ENCODE measurements at regions of chr2 and their contacts with region 1.

Region 1: DNA sequence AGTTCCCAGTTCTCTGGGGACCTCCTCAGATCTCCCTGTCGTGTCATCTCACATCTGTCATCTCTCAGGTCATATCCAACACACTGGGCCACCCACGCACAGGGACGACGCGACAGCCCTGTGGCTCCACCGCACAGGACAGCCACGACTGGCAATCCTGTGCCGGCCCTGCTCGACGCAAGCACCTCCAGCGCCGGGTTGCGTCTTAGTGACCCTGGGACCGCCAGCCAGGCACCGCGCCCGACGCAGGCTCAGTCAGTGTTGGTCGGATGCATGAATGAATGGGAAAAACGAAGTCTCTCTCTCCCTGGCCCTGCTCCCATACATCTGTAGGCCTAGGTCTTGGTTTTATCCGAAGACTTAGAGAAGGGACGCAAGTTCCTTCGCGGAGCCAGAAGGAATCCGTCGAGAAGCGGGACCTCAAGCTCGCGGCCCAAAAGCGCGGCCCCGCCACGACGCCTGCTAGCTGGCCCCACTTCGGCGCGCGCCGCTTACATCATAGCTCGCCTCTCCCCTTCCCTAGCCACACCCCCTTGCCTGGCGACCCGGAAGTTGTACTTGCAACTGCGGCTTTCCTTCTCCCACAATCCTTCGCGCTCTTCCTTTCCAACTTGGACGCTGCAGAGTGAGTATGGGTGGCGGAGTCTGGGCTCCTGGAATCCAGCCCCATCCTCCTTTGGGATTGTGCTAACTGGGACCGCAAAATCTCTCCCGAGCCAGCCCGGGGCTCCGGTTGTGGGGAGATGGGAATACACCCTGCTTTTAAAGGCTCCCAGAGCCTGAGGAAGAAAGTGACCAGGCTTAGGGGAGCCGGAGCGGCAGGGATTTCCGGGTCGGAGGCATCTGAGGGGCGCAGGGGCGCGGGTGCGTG is at the start of gene RPL31:
- DNase-seq: peak; percentile 92 to 98
- ATAC-seq: peak; percentile 96 to 98 (median 97)
- H3K4me3 ChIP-seq: peak within 1 kb of the TSS; percentile 92
- H3K4me3 Mint-ChIP-seq: peak within 1 kb of the TSS; percentile 90
- H3K27ac ChIP-seq: peak within 1 kb of the TSS; percentile 81
- H3K27ac Mint-ChIP-seq: peak within 1 kb of the TSS; percentile 91 to 93
- H3K4me1 ChIP-seq: peaks cover 25% of the 10 kb centered on the region
- H3K4me1 Mint-ChIP-seq: peaks cover 34 to 42% of the 10 kb centered on the region in 2 donors
- H3K27me3 ChIP-seq: no peaks in the 10 kb centered on the region
- H3K27me3 Mint-ChIP-seq: peaks cover 3 to 9% of the 10 kb centered on the region in 2 donors
- CTCF ChIP-seq: no peak
- total RNA-seq, gene RPL31: 797 to 996 (median 940) TPM

Region 2: GRCh38 chr2:100416935-100417710 is 584.8 kb before region 1 on chr2 and contains the start of gene CHST10:
- intact Hi-C with region 1: loop called (anchors 5 kb)
- DNase-seq: peak; percentile 39 to 60
- ATAC-seq: peak; percentile 86 to 93 (median 92)
- H3K4me3 ChIP-seq: peak within 1 kb of the TSS; percentile 56
- H3K4me3 Mint-ChIP-seq: peak within 1 kb of the TSS; percentile 91
- H3K27ac ChIP-seq: no peak within 1 kb of the TSS
- H3K27ac Mint-ChIP-seq: peak within 1 kb of the TSS; percentile 22 to 77
- H3K4me1 ChIP-seq: peaks cover 8% of the 10 kb centered on the region
- H3K4me1 Mint-ChIP-seq: peaks cover 18 to 21% of the 10 kb centered on the region in 2 donors
- H3K27me3 ChIP-seq: no peaks in the 10 kb centered on the region
- H3K27me3 Mint-ChIP-seq: no peaks in the 10 kb centered on the region
- CTCF ChIP-seq: no peak
- total RNA-seq, gene CHST10: 11.1 to 15.3 (median 13.4) TPM

Region 3: GRCh38 chr2:100580367-100581276 is 421.3 kb before region 1 on chr2:
- intact Hi-C with region 1: loop called (anchors 5 kb)
- DNase-seq: peak; percentile 63 to 86
- ATAC-seq: peak; percentile 72 to 93 (median 86)
- H3K4me3 ChIP-seq: peak overlapping the region; percentile 27
- H3K4me3 Mint-ChIP-seq: peak overlapping the region; percentile 92
- H3K27ac ChIP-seq: peak overlapping the region; percentile 93
- H3K27ac Mint-ChIP-seq: peak overlapping the region; percentile 99 to 100
- H3K4me1 ChIP-seq: peaks cover 29% of the 10 kb centered on the region
- H3K4me1 Mint-ChIP-seq: peaks cover 36 to 40% of the 10 kb centered on the region in 2 donors
- H3K27me3 ChIP-seq: no peaks in the 10 kb centered on the region
- H3K27me3 Mint-ChIP-seq: no peaks in the 10 kb centered on the region
- CTCF ChIP-seq: no peak

Region 4: GRCh38 chr2:101252408-101253012 is 250.6 kb after region 1 on chr2 and contains the start of gene CNOT11:
- intact Hi-C with region 1: loop called (anchors 2 kb)
- DNase-seq: peak; percentile 96 to 100
- ATAC-seq: peak; percentile 79 to 93 (median 85)
- H3K4me3 ChIP-seq: peak within 1 kb of the TSS; percentile 84
- H3K4me3 Mint-ChIP-seq: peak within 1 kb of the TSS; percentile 98
- H3K27ac ChIP-seq: peak within 1 kb of the TSS; percentile 96
- H3K27ac Mint-ChIP-seq: peak within 1 kb of the TSS; percentile 93 to 94
- H3K4me1 ChIP-seq: peaks cover 35% of the 10 kb centered on the region
- H3K4me1 Mint-ChIP-seq: peaks cover 41 to 44% of the 10 kb centered on the region in 2 donors
- H3K27me3 ChIP-seq: no peaks in the 10 kb centered on the region
- H3K27me3 Mint-ChIP-seq: no peaks in the 10 kb centered on the region
- CTCF ChIP-seq: no peak
- total RNA-seq, gene CNOT11: 41.7 to 49.8 (median 46.0) TPM

Region 5: DNA sequence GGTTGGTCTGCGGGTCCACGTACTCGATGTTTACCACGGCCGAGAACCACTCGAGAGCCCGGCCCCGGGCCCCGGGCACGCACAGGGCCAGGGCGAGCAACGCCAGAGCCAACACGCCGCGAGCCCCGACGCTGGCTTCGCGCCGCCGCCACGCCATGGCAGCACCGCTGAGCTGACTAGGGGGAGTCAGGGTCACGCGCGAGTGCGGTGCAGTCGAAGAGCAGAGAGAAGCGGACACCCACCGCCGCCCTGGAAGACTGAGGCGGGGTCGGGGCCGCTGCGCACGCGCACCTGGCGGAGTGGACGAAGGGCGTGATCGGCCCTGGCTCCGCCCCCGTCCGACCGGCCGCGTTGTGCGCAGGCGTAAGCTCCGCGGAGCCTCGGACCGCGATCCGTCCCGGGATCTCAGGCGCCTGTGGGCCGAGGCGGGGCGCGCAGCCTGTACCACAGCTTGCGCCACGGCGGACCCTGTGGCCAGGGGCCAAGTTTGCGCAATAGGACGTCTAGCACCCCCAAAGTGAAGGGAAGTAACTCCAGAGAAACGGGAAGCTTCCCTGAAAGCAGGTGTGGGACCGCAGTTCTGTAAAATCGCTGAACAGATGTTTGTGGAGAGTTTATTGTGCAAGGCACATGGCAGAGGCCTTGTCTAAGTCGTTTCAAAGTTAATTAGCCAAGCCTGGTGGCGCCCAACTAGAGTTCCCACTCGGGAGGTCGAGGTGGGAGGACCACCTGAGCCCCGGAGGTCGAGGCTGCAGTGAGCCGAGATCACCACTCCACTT is 306.7 kb after region 1 on chr2 and contains the start of gene RNF149:
- intact Hi-C with region 1: loop called (anchors 1 kb)
- DNase-seq: peak; percentile 94 to 95
- ATAC-seq: peak; percentile 72 to 88 (median 83)
- H3K4me3 ChIP-seq: peak within 1 kb of the TSS; percentile 73
- H3K4me3 Mint-ChIP-seq: peak within 1 kb of the TSS; percentile 99
- H3K27ac ChIP-seq: peak within 1 kb of the TSS; percentile 87
- H3K27ac Mint-ChIP-seq: peak within 1 kb of the TSS; percentile 96 to 98
- H3K4me1 ChIP-seq: peaks cover 56% of the 10 kb centered on the region
- H3K4me1 Mint-ChIP-seq: peaks cover 77 to 80% of the 10 kb centered on the region in 2 donors
- H3K27me3 ChIP-seq: no peaks in the 10 kb centered on the region
- H3K27me3 Mint-ChIP-seq: no peaks in the 10 kb centered on the region
- CTCF ChIP-seq: no peak
- total RNA-seq, gene RNF149: 133 to 151 (median 149) TPM